HEK293 (cell line): ENCODE measurements at regions of chr6 and their contacts with region 1.

Region 1: DNA sequence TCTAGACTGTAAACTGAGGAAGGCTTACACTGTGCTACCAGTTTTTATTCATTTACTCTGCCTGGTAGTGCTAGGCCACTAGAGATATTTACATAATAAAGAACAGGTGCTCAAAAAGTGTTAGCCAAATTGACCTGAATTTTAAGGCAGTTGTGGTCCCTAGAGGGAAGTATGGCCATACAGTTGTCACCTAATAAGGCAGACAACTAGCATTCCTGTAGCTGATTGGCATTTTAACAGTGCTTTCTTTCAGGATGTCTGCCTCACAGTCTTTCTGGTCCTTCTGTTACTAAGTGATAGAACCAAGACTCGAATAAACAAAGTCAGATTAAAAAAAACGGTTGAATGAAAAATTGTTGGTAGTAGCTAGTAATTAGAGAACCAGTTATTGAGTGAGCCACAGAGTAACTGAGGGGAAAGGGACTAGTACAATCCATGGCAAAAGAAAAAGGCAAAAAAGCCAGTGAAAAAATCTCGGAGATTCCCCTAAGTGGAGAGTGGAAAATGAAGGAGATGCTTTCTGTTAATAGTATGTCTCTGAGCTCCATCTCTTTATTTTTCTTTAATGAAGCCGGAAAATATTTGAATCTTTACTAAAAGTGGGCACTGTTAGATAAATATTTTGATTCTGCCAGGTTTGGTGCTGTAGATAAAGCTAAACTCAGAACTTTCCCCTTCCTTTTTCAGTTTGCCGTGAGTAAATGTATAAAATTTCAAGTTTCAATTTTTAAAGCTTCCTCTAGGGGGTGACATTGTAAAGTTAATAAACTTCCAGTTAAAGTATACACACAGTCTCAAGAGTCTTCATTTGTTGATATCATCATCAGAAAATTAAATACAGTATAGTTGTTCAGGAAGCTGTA is 9.1 kb downstream of the VTA1 start:
- H3K4me3 ChIP-seq: no peak overlapping the region
- H3K27ac ChIP-seq: no peak overlapping the region
- H3K4me1 ChIP-seq: peaks cover 9% of the 10 kb centered on the region; the same call in 1 of the 2 replicates
- CTCF ChIP-seq: no peak

Region 2: DNA sequence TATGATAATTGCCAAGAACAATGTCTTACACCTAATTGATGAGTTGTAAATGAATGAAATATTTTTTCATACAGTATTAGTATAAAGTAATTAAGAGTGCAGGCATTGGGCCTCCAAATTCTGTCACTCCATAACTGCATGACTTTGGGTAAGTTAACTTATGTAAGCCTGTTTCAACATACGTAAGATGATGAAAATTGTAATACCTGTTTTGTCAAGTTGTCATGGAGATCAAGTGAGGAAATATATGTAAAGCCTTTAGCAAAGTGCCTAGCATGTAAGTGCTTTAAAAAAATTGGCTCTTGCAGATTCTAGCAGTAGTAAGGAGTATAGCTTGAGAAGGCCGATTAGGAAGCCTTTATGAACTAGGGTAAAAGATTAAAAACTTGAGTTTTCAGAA is 21.1 kb after region 1 on chr6:
- CTCF ChIA-PET with region 1: interaction called, 14 read pairs
- POLR2A ChIA-PET with region 1: no interaction called
- H3K4me3 ChIP-seq: no peak overlapping the region
- H3K27ac ChIP-seq: no peak overlapping the region
- H3K4me1 ChIP-seq: no peaks in the 10 kb centered on the region
- CTCF ChIP-seq: no peak

Region 3: GRCh38 chr6:142195862-142196541 is 39.9 kb after region 1 on chr6:
- CTCF ChIA-PET with region 1: interaction called, 14 read pairs
- POLR2A ChIA-PET with region 1: no interaction called
- H3K4me3 ChIP-seq: no peak overlapping the region
- H3K27ac ChIP-seq: no peak overlapping the region
- H3K4me1 ChIP-seq: no peaks in the 10 kb centered on the region
- CTCF ChIP-seq: no peak

Region 4: GRCh38 chr6:142218446-142218845 is 62.3 kb after region 1 on chr6:
- CTCF ChIA-PET with region 1: interaction called, 15 read pairs
- POLR2A ChIA-PET with region 1: no interaction called
- H3K4me3 ChIP-seq: no peak overlapping the region
- H3K27ac ChIP-seq: no peak overlapping the region
- H3K4me1 ChIP-seq: no peaks in the 10 kb centered on the region
- CTCF ChIP-seq: no peak

Region 5: GRCh38 chr6:142387997-142388815 is 232.1 kb after region 1 on chr6:
- CTCF ChIA-PET with region 1: interaction called, 49 read pairs
- POLR2A ChIA-PET with region 1: no interaction called
- H3K4me3 ChIP-seq: no peak overlapping the region
- H3K27ac ChIP-seq: no peak overlapping the region
- H3K4me1 ChIP-seq: peaks cover 6% of the 10 kb centered on the region; the same call in 1 of the 2 replicates
- CTCF ChIP-seq: no peak; the same call in 1 of the 2 replicates